CD4-positive, alpha-beta T cell (primary cell): ENCODE measurements at regions of chr22 and their contacts with region 1.

Region 1: GRCh38 chr22:35350539-35351503 is 30.1 kb upstream of the HMOX1 start:
- DNase-seq: peak; percentile 69 to 93 (median 79)
- ATAC-seq: peak; percentile 81
- H3K4me3 ChIP-seq: peak overlapping the region; percentile 55
- H3K4me3 Mint-ChIP-seq: peak overlapping the region; percentile 80
- H3K27ac ChIP-seq: no peak overlapping the region
- H3K27ac Mint-ChIP-seq: peak overlapping the region; percentile 43
- H3K4me1 ChIP-seq: peaks cover 31% of the 10 kb centered on the region
- H3K4me1 Mint-ChIP-seq: peaks cover 25% of the 10 kb centered on the region
- H3K27me3 ChIP-seq: no peaks in the 10 kb centered on the region
- H3K27me3 Mint-ChIP-seq: peaks cover 12% of the 10 kb centered on the region
- CTCF ChIP-seq: peak; percentile 84

Region 2: GRCh38 chr22:35317680-35318290 is 33.0 kb before region 1 on chr22:
- CTCF ChIA-PET with region 1: no interaction called
- POLR2A ChIA-PET with region 1: no interaction called
- intact Hi-C with region 1: no loop called
- DNase-seq: no peak
- ATAC-seq: no peak
- H3K4me3 ChIP-seq: no peak overlapping the region
- H3K4me3 Mint-ChIP-seq: no peak overlapping the region
- H3K27ac ChIP-seq: no peak overlapping the region
- H3K27ac Mint-ChIP-seq: no peak overlapping the region
- H3K4me1 ChIP-seq: peaks cover 35% of the 10 kb centered on the region
- H3K4me1 Mint-ChIP-seq: peaks cover 27% of the 10 kb centered on the region
- H3K27me3 ChIP-seq: no peaks in the 10 kb centered on the region
- H3K27me3 Mint-ChIP-seq: no peaks in the 10 kb centered on the region
- CTCF ChIP-seq: no peak

Region 3: DNA sequence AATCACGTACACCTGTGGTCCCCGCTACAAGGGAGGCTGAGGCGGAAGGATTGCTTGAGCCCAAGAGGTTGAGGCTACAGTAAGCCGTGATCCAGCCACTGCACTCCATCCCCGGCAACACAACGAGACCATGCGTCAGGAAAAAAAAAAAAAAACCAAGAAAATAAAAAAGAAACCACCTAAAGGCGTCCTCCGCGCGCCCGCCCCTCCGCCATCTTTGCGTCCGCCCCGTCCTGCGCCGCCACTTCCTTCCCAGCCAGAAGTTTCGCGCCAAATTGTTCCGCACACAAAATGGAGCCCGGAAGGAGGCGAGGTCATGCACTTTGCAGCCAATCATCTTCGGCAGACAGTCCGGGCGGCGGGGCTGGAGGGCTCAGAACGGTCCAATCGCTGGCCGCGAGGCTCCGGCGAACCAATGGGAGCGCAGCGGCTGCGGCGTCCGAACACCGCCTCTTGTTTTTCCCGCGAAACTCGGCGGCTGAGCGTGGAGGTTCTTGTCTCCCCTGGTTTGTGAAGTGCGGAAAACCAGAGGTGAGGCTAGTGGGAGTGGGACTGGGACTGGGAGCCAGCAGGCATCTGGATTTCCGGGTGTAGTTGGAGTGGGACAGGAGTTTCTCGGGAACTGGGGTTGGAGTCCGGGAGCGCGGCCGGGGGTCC is 49.0 kb after region 1 on chr22 and contains the start of gene MCM5:
- CTCF ChIA-PET with region 1: no interaction called
- POLR2A ChIA-PET with region 1: no interaction called
- intact Hi-C with region 1: loop called in 1 of 2 experiments (anchors 5 kb)
- DNase-seq: peak; percentile 94 to 99 (median 96)
- ATAC-seq: peak; percentile 98
- H3K4me3 ChIP-seq: peak within 1 kb of the TSS; percentile 87
- H3K4me3 Mint-ChIP-seq: peak within 1 kb of the TSS; percentile 98
- H3K27ac ChIP-seq: peak within 1 kb of the TSS; percentile 12 to 69
- H3K27ac Mint-ChIP-seq: peak within 1 kb of the TSS; percentile 95
- H3K4me1 ChIP-seq: peaks cover 34% of the 10 kb centered on the region
- H3K4me1 Mint-ChIP-seq: peaks cover 18% of the 10 kb centered on the region
- H3K27me3 ChIP-seq: no peaks in the 10 kb centered on the region
- H3K27me3 Mint-ChIP-seq: no peaks in the 10 kb centered on the region
- CTCF ChIP-seq: no peak
- total RNA-seq, gene MCM5: 21.6 to 22.6 TPM

Region 4: DNA sequence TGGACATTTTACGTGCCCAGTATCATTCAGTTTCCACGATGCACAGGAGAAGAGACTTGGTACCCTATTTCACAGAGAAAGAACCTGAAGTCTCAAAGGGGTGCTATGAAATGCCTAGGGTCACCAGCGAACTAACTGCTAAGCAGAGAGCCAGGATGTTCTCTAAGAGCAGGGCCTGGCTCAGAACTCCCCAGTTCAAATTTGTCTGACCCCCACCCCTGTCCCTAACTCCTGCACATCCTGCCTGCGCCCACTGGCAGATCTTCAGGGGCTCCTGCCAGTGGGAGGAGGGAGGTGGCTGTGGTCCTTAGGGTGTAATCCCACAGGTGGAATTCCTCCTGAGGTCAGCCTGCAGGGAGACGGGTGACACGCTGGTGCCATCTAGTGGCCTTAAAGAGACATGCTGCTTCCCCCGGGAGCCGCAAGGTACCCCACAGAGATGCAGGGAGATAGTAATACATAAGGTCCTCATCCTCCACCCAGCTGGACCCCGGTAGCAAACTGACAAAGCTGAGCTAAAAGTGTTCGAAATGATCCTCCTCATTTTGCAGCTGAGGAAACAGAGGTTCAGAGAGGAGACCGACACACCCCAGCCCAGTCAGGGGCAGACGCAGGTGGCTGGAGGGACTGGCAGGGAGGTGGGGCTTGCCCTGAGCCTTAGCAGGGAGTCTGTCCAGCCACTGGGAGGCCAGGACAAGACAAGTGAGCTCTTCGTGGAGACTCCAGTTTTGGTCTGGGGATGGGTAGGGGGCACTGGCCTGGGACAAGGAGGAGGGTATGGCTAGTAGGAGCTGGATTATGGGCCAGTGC is 232.2 kb after region 1 on chr22:
- CTCF ChIA-PET with region 1: interaction called, 4 read pairs
- POLR2A ChIA-PET with region 1: no interaction called
- intact Hi-C with region 1: loop called (anchors 1 kb)
- DNase-seq: peak; percentile 20 to 80 (median 41)
- ATAC-seq: peak; percentile 64
- H3K4me3 ChIP-seq: no peak overlapping the region
- H3K4me3 Mint-ChIP-seq: no peak overlapping the region
- H3K27ac ChIP-seq: no peak overlapping the region
- H3K27ac Mint-ChIP-seq: no peak overlapping the region
- H3K4me1 ChIP-seq: no peaks in the 10 kb centered on the region
- H3K4me1 Mint-ChIP-seq: no peaks in the 10 kb centered on the region
- H3K27me3 ChIP-seq: no peaks in the 10 kb centered on the region
- H3K27me3 Mint-ChIP-seq: no peaks in the 10 kb centered on the region
- CTCF ChIP-seq: peak; percentile 91

Region 5: DNA sequence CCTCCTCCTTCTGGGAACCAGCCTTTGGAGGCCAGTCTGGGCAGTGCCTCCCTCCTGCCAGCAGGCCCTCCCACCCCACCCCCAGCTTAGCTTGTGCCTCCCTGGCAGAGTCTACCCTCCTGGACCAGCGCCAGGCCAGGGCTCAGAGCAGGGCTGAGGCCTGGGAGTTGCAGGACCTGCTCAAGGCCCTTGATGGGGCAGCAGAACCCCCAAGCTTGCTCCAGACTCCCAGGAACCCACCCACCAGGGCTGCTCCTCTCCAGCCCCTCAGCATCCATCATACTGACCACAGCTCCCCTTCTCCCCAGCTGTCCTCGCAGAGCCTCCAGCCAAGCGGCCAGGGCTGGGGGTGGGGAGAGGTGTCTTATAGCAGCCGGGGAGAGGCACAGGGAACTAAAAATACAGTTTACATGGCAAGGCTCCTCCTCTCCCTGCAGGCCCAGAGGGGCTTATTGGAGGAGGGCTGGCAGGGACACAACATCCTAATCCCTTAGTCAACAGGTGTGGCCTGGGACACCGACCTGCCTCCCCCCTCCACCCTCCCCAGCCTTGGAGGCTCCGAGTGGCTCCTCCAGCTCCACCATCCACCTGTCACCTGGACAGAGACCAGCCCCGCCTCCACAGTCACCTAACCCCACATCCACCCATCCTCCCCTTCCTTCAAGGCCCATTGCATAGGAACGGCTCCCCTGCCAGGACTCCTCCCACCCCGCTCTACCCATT is 271.5 kb after region 1 on chr22:
- CTCF ChIA-PET with region 1: no interaction called
- POLR2A ChIA-PET with region 1: no interaction called
- intact Hi-C with region 1: loop called (anchors 1 to 2 kb)
- DNase-seq: no peak
- ATAC-seq: no peak
- H3K4me3 ChIP-seq: no peak overlapping the region
- H3K4me3 Mint-ChIP-seq: no peak overlapping the region
- H3K27ac ChIP-seq: no peak overlapping the region
- H3K27ac Mint-ChIP-seq: no peak overlapping the region
- H3K4me1 ChIP-seq: peaks cover 9% of the 10 kb centered on the region
- H3K4me1 Mint-ChIP-seq: peaks cover 10% of the 10 kb centered on the region
- H3K27me3 ChIP-seq: no peaks in the 10 kb centered on the region
- H3K27me3 Mint-ChIP-seq: peaks cover 9% of the 10 kb centered on the region
- CTCF ChIP-seq: no peak

Region 6: DNA sequence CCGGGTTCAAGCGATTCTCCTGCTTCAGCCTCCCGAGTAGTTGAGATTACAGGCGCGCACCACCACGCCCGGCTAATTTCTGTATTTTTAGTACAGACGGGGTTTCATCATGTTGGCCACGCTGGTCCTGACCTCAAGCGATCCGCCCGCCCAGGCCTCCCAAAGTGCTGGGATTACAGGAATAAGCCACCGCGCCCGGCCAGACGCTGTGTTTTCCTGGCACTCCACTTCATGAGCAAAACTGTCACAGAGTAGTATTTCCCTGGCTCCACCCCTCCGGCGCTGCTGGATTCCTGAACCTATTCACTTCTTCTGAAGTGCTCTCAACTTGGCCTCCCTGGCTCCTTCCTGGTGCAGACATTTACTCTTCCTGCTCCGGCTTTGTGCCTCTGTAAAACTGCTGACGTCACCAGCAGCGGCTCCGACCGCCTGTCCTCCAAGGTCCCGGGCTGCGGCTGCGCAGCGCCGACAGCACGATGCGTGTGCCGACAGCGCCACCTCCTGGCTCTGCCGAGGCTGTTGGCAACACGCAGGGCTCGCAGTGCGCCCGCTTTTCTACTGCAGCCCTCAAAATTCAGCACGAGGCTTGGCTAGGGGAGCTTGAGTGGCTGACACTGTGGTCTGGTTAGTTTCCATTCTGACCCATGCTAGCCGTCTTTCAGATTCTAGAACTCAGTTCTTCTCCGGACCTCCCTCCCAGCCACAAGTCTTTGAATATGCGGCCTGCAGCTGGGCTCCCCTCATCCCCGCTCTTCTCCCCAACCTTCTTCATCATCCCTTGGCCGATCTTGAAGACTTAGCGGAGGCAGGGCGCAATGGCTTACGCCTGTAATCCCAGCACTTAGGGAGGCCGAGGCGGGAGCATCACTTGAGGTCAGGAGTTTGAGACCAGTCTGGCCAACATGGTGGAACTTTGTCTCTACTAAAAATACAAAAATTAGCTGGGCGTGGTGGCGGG is 773.1 kb after region 1 on chr22:
- CTCF ChIA-PET with region 1: interaction called, 4 read pairs
- POLR2A ChIA-PET with region 1: no interaction called
- intact Hi-C with region 1: loop called in 1 of 2 experiments (anchors 1 kb)
- DNase-seq: peak; percentile 87 to 98 (median 92)
- ATAC-seq: peak; percentile 97
- H3K4me3 ChIP-seq: peak overlapping the region; percentile 47
- H3K4me3 Mint-ChIP-seq: peak overlapping the region; percentile 60
- H3K27ac ChIP-seq: peak overlapping the region in 1 of 2 donors; percentile 32
- H3K27ac Mint-ChIP-seq: peak overlapping the region; percentile 70
- H3K4me1 ChIP-seq: peaks cover 13% of the 10 kb centered on the region
- H3K4me1 Mint-ChIP-seq: peaks cover 8% of the 10 kb centered on the region
- H3K27me3 ChIP-seq: no peaks in the 10 kb centered on the region
- H3K27me3 Mint-ChIP-seq: no peaks in the 10 kb centered on the region
- CTCF ChIP-seq: peak; percentile 97

Region 7: GRCh38 chr22:36221799-36222751 is 871.3 kb after region 1 on chr22:
- CTCF ChIA-PET with region 1: no interaction called
- POLR2A ChIA-PET with region 1: no interaction called
- intact Hi-C with region 1: loop called in 1 of 2 experiments (anchors 5 kb)
- DNase-seq: peak in 13 of 14 experiments; percentile 27 to 77 (median 50)
- ATAC-seq: peak; percentile 81
- H3K4me3 ChIP-seq: no peak overlapping the region
- H3K4me3 Mint-ChIP-seq: no peak overlapping the region
- H3K27ac ChIP-seq: no peak overlapping the region
- H3K27ac Mint-ChIP-seq: no peak overlapping the region
- H3K4me1 ChIP-seq: peaks cover 3% of the 10 kb centered on the region
- H3K4me1 Mint-ChIP-seq: peaks cover 7% of the 10 kb centered on the region
- H3K27me3 ChIP-seq: no peaks in the 10 kb centered on the region
- H3K27me3 Mint-ChIP-seq: peaks cover 13% of the 10 kb centered on the region
- CTCF ChIP-seq: peak; percentile 72